PC-3 (cell line): ENCODE measurements at regions of chr2 and their contacts with region 1.

Region 1: DNA sequence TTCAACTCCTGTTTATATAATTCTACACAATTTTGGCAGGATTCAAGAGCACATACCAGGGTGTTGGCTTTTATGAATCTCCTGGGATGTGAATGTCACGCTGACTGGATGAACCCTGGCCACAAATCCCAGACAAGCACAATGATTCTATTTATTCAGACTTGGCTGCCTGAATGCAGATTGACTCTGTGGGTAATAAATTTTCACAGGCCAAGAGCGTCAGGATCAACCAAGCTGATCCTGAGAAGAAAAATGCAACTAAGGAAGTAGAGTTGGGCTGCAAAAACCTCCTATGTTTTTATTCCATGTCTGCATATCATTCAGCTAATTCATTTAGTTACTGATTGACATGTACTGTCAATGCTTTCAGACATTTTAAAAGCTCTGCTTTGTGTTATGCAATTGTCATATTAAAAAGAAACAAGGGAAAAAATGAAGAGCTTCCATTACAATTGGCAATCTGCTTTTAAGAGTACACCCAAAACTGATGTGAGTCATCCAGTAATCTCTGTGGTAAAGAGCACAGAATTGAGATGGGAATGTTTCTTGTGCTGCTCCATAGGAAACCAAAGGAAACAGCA is 173.0 kb upstream of the REV1 start:
- DNase-seq: peak; percentile 84
- ATAC-seq: peak; percentile 90
- H3K4me3 ChIP-seq: peak overlapping the region; percentile 11; the same call in 1 of the 2 replicates
- H3K27ac ChIP-seq: peak overlapping the region; percentile 91
- H3K4me1 ChIP-seq: peaks cover 22% of the 10 kb centered on the region
- H3K27me3 ChIP-seq: no peaks in the 10 kb centered on the region
- CTCF ChIP-seq: no peak

Region 2: DNA sequence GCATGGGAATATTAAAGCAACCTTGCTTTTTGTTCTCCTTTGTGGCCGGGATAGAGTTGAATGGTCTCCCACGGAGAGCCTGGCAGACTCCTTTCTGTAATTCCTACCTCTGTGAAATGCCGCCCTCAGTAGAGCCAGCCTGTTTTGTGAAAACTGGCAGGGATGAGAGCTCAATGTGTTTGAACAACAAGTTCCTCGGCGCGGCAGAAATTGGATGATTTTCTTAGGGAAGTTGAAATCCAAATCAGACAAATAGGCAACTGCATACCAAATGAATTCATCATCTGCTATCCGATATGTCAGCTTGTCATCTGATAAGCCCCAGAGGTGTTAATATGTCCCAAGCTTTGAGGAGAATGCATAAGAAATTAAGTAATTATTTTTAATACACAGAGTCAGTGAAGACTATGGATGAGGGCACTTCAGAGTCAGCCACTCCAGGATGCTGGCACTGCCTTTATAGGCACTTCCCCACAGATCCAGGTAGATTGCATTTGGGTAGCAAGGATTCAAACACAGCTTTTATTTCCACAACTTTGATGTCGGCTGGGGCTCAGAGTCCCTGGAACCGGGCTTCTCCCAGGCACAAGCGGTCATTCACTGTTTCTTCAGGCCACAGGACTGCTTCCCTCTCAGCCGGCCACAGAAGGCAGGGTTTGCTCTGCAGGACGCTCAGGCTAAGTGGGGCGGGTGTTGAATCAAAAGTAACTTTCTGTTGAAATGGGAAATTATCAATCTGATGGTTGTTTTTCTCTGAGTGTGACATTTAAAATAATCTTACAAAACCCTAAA is 90.3 kb before region 1 on chr2:
- CTCF ChIA-PET with region 1: no interaction called
- POLR2A ChIA-PET with region 1: no interaction called
- intact Hi-C with region 1: loop called (anchors 5 kb)
- DNase-seq: peak; percentile 18
- ATAC-seq: peak; percentile 42
- H3K4me3 ChIP-seq: no peak overlapping the region
- H3K27ac ChIP-seq: no peak overlapping the region
- H3K4me1 ChIP-seq: peaks cover 5% of the 10 kb centered on the region
- H3K27me3 ChIP-seq: no peaks in the 10 kb centered on the region
- CTCF ChIP-seq: no peak

Region 3: GRCh38 chr2:99808361-99809200 is 145.7 kb after region 1 on chr2:
- CTCF ChIA-PET with region 1: no interaction called
- POLR2A ChIA-PET with region 1: no interaction called
- intact Hi-C with region 1: loop called (anchors 2 kb)
- DNase-seq: peak; percentile 92
- ATAC-seq: peak; percentile 56
- H3K4me3 ChIP-seq: peak overlapping the region; percentile 29
- H3K27ac ChIP-seq: peak overlapping the region; percentile 82
- H3K4me1 ChIP-seq: peaks cover 83% of the 10 kb centered on the region
- H3K27me3 ChIP-seq: no peaks in the 10 kb centered on the region
- CTCF ChIP-seq: no peak

Region 4: DNA sequence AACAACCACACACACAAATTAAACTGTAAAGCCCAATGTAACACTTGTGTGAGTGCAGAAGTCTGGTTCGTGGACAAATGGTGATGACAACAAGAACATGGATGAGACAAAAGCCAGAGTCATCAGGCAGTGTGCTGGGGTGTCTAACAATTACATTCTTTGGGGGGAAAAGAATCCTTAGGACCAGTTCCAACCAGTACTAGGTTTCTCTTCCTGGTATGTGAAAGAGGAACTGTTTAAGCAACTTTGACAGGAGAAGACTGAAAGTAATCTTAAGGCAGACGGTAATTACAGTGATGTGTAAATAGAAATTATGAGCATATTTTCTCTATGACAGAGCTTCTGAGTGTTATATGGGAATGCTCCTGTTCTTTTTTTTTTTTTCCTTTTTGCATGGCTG is 346.1 kb after region 1 on chr2:
- CTCF ChIA-PET with region 1: no interaction called
- POLR2A ChIA-PET with region 1: no interaction called
- intact Hi-C with region 1: no loop called
- DNase-seq: no peak
- ATAC-seq: no peak
- H3K4me3 ChIP-seq: no peak overlapping the region
- H3K27ac ChIP-seq: no peak overlapping the region
- H3K4me1 ChIP-seq: peaks cover 19% of the 10 kb centered on the region
- H3K27me3 ChIP-seq: no peaks in the 10 kb centered on the region
- CTCF ChIP-seq: no peak